ENCODE measurements at regions of chr4 and their contacts with region 1.

Region 1: DNA sequence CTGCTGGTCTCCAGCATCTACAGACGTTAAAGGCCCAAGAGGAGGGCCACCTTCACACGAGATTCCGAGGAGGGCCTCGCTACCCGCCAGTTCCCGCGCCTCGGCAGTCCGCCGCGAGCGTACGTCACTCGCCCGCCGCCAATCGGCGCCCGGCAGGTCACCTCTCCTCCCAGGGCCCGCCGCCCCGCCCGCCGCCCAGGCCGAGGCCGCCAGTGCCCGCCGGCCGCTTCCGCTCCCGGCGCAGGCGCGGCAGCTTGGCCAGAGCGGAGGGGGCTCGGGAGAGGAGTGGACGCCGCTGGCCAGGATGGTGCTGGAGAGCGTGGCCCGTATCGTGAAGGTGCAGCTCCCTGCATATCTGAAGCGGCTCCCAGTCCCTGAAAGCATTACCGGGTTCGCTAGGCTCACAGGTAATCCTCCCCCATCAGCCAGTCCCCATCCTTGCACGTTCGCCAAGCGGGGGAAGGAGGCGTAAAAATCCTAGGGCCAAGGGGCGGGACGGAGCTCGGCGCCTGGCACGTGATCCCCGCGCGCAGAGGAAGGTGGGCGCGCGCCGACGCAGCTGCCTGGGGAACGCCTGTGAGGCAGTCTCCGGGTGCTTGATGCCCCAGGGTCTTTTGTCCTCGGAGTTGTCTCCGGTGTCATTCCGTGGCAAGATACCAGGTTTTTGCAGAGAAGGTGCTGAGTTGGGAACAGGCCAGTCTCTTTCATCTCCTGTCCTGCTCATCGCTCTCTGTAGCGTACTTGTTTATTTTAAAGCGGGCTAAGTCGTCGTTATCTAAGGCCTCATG is at the start of gene CISD2:
- DNase-seq: peak; percentile 61
- ATAC-seq: peak; percentile 97
- H3K4me3 ChIP-seq: peak within 1 kb of the TSS; percentile 80 to 94
- H3K27ac ChIP-seq: peak within 1 kb of the TSS; percentile 95
- H3K4me1 ChIP-seq: peaks cover 12% of the 10 kb centered on the region
- H3K27me3 ChIP-seq: no peaks in the 10 kb centered on the region
- CTCF ChIP-seq: no peak
- total RNA-seq, gene CISD2: 39.0 TPM

Region 2: DNA sequence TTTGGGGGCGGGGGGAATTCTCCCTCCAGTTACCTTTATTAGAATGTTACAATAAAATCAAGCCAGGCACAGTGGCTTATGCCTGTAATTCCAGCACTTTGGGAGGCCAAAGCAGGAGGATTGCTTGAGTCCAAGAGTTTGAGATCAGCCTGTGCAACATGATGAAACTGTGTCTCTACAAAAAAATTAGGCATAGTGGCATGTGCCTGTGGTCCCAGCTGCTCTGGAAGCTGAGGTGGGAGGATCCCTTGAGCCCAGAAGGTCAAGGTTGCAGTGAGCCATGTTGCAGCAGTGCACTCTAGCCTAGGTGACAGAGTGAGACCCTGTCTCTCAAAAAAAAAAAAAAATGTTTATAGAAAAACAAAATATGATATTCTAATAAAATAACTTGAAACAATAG is 36.3 kb before region 1 on chr4:
- CTCF ChIA-PET with region 1: no interaction called
- POLR2A ChIA-PET with region 1: interaction called, 23 read pairs
- in situ Hi-C with region 1: no loop called
- intact Hi-C with region 1: loop called (anchors 5 kb)
- DNase-seq: no peak
- ATAC-seq: no peak
- H3K4me3 ChIP-seq: no peak overlapping the region
- H3K27ac ChIP-seq: no peak overlapping the region
- H3K4me1 ChIP-seq: peaks cover 6% of the 10 kb centered on the region; the same call in 1 of the 2 replicates
- H3K27me3 ChIP-seq: no peaks in the 10 kb centered on the region
- CTCF ChIP-seq: no peak